Mammary epithelial cell (primary cell): ENCODE measurements at regions of chr7 and their contacts with region 1.

Region 1: GRCh38 chr7:11447106-11447505 is 384.9 kb downstream of the THSD7A start:
- DNase-seq: no peak
- H3K4me3 ChIP-seq: no peak overlapping the region
- H3K27ac ChIP-seq: no peak overlapping the region
- H3K4me1 ChIP-seq: no peaks in the 10 kb centered on the region
- H3K27me3 ChIP-seq: no peaks in the 10 kb centered on the region
- CTCF ChIP-seq: no peak

Region 2: DNA sequence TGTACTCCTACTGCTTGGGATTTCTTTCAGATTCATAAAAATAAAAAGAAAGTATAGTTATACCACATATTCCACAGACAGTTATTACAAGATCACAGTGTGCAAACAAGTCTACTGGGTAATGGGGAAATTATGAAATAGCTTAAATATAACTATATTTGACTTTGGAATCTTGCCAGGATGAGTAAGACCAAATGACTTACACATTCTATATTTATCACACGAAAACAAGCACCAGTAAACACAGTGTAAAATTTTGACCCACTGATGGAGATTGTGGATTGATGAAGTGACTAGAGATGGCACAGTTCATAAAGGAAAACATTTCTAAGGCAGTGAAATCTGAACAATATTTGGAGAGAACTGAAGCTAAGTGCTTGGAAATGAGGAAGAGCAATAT is 45.2 kb after region 1 on chr7:
- CTCF ChIA-PET with region 1: no interaction called
- dilution Hi-C with region 1: loop called (anchors 5 kb)
- in situ Hi-C with region 1: no loop called
- intact Hi-C with region 1: no loop called
- DNase-seq: no peak
- H3K4me3 ChIP-seq: no peak overlapping the region
- H3K27ac ChIP-seq: no peak overlapping the region
- H3K4me1 ChIP-seq: no peaks in the 10 kb centered on the region
- H3K27me3 ChIP-seq: no peaks in the 10 kb centered on the region
- CTCF ChIP-seq: no peak

Region 3: DNA sequence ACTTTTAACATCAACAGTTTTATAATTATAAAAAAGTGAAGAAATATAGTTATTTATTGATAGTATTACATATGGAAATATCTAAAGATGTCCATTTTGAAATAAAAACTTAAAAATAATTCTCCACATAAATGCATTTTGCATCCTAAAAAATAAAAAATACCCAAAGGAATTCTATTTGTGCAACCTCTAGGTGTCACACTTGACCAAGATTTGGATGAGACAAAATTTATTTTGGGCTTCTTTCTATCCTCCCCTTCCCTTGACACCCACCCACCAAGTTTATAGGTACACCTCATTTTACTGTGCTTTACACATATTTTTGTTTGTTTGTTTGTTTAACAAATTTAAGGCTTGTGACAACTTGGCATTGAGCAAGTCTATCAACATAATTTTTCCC is 388.2 kb after region 1 on chr7:
- CTCF ChIA-PET with region 1: no interaction called
- dilution Hi-C with region 1: no loop called
- in situ Hi-C with region 1: no loop called
- intact Hi-C with region 1: no loop called
- DNase-seq: no peak
- H3K4me3 ChIP-seq: no peak overlapping the region
- H3K27ac ChIP-seq: no peak overlapping the region
- H3K4me1 ChIP-seq: peaks cover 14% of the 10 kb centered on the region
- H3K27me3 ChIP-seq: peaks cover 21% of the 10 kb centered on the region
- CTCF ChIP-seq: peak; percentile 19 to 34